A549 (cell line): ENCODE measurements at regions of chr7 and their contacts with region 1.

Region 1: GRCh38 chr7:82729172-82730030 is 285.8 kb upstream of the CACNA2D1 start:
- DNase-seq: peak; percentile 17 to 59
- ATAC-seq: peak in 1 of 2 experiments; percentile 72; a peak in 3 of 6 replicates
- H3K4me3 ChIP-seq: no peak overlapping the region
- H3K27ac ChIP-seq: no peak overlapping the region
- H3K4me1 ChIP-seq: peaks cover 13% of the 10 kb centered on the region; the same call in 2 of the 3 replicates
- CTCF ChIP-seq: peak; percentile 94
- EP300 ChIP-seq: no peak
- POLR2A ChIP-seq: no peak
- RAD21 ChIP-seq: peak; percentile 90 to 91

Region 2: DNA sequence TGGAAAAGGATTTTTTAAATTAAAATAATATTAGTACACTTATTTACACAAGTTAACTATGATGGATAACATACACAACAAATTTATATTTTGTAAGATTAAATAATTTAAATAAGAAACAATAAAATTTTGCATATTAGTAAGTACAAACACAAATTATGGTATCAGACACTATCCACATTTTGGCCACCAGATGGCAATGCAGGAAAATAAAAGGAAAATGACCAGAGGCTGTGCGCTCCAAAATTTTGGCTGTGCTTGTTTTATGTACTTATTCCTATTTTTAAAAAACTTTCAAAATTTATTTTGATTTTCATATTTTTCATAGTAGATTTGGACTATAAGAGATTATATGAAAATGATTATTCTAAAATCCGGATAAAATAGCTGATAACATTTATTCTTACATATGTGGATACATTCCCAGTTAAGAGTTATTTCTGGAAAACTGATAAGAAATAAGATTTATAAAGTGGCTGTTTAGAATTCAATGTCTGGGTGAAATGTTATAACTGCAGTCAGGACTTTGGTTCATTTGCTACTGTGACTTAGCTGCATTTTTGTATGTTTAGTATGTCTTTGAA is 684.8 kb before region 1 on chr7:
- CTCF ChIA-PET with region 1: interaction called, 10 read pairs
- POLR2A ChIA-PET with region 1: no interaction called
- DNase-seq: peak in 1 of 2 experiments; percentile 66
- ATAC-seq: peak in 1 of 2 experiments; percentile 22; a peak in 1 of 6 replicates
- H3K4me3 ChIP-seq: no peak overlapping the region
- H3K27ac ChIP-seq: peak overlapping the region in 1 of 2 experiments; percentile 24; a peak in 4 of 6 replicates
- H3K4me1 ChIP-seq: peaks cover 29% of the 10 kb centered on the region
- CTCF ChIP-seq: peak; percentile 94
- EP300 ChIP-seq: no peak
- POLR2A ChIP-seq: no peak
- RAD21 ChIP-seq: peak; percentile 92 to 98

Region 3: GRCh38 chr7:82816272-82816671 is 86.9 kb after region 1 on chr7:
- CTCF ChIA-PET with region 1: no interaction called
- POLR2A ChIA-PET with region 1: no interaction called
- DNase-seq: no peak
- ATAC-seq: no peak
- H3K4me3 ChIP-seq: no peak overlapping the region
- H3K27ac ChIP-seq: no peak overlapping the region
- H3K4me1 ChIP-seq: no peaks in the 10 kb centered on the region
- CTCF ChIP-seq: no peak
- EP300 ChIP-seq: no peak
- POLR2A ChIP-seq: no peak
- RAD21 ChIP-seq: no peak